ENCODE measurements at regions of chr17 and their contacts with region 1.

Region 1: GRCh38 chr17:41548844-41549595 is 20.9 kb upstream of the KRT19 start:
- DNase-seq: peak; percentile 70 to 90 (median 77)
- ATAC-seq: peak; percentile 90 to 92 (median 90)
- H3K4me3 ChIP-seq: peak overlapping the region in 10 of 12 donors; percentile 18 to 42 (median 29)
- H3K27ac ChIP-seq: peak overlapping the region in 2 of 12 donors; percentile 10 to 54
- H3K4me1 ChIP-seq: peaks cover 0 to 20% (median 10%) of the 10 kb centered on the region in 12 donors
- H3K27me3 ChIP-seq: peaks cover 0 to 19% (median 2%) of the 10 kb centered on the region in 9 donors
- CTCF ChIP-seq: peak; percentile 78 to 93 (median 83)
- POLR2A ChIP-seq: no peak

Region 2: GRCh38 chr17:40615295-40615988 is 933.6 kb before region 1 on chr17:
- intact Hi-C with region 1: loop called in 1 of 10 experiments (anchors 10 kb)
- DNase-seq: peak in 1 of 5 donors; percentile 39
- ATAC-seq: peak in 2 of 4 donors; percentile 43 to 45
- H3K4me3 ChIP-seq: no peak overlapping the region
- H3K27ac ChIP-seq: peak overlapping the region in 1 of 12 donors; percentile 32
- H3K4me1 ChIP-seq: peaks cover 0 to 25% (median 0%) of the 10 kb centered on the region in 12 donors
- H3K27me3 ChIP-seq: peaks cover 0 to 47% (median 4%) of the 10 kb centered on the region in 9 donors
- CTCF ChIP-seq: peak in 9 of 12 donors; percentile 7 to 42 (median 24)
- POLR2A ChIP-seq: no peak

Region 3: DNA sequence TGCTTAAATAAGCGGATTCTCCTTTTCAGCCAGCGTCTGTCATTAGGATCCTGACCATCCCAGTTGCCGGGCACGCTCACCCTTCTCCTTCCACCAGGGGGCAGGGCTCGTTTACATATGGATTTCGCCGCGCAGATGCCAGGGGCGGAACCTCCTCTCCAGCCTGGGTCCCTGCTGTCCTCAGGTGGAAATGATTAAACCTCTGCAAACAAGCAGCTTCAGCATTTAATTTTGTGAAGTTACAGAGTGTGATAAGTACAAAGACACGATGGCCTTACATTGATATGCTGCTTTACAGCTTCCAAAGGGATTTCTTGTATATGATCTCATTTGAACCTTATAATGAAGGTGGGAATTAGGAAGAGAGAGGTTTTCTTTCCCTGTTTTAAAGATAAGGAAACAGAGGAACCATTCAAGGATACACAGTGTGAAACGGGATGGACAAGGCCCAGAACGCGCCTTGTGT is 745.4 kb before region 1 on chr17:
- intact Hi-C with region 1: loop called in 3 of 10 experiments (anchors 2 to 10 kb)
- DNase-seq: peak; percentile 65 to 78 (median 70)
- ATAC-seq: peak; percentile 61 to 90 (median 86)
- H3K4me3 ChIP-seq: no peak overlapping the region
- H3K27ac ChIP-seq: no peak overlapping the region
- H3K4me1 ChIP-seq: peaks cover 0 to 6% (median 1%) of the 10 kb centered on the region in 12 donors
- H3K27me3 ChIP-seq: peaks cover 0 to 37% (median 8%) of the 10 kb centered on the region in 9 donors
- CTCF ChIP-seq: peak; percentile 72 to 92 (median 83)
- POLR2A ChIP-seq: no peak

Region 4: DNA sequence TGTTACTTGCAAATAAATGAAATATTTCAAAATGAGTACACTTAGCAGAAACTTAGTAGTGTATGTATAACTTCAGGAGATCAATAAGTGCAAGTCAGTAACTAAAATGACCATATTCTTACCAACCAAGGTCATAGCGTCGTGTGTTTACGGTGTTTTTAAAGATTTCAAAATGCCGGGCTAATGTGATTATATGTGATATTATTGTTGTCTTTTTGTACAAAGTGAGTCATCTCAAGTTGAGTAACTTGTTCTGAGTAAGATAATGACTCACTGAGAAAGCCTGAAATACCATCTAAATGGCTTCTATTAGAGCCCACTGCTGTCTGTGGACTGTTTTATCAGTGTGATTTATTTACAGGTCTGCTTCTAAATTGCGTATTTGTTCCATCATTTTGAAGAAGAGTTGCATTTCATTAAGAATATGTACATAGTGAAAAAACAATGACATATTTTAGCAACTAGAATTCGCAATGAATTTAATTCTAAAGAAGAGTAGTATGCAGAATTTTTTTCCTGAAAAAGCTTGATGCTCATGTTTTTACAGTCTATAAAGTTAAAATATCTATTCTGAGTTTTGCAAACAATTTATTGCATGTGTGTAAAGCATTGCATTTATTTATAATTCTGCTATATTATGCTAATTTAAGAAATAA is 694.7 kb before region 1 on chr17:
- intact Hi-C with region 1: loop called in 6 of 10 experiments (anchors 2 to 10 kb)
- DNase-seq: no peak
- ATAC-seq: no peak
- H3K4me3 ChIP-seq: no peak overlapping the region
- H3K27ac ChIP-seq: no peak overlapping the region
- H3K4me1 ChIP-seq: peaks cover 0 to 11% (median 2%) of the 10 kb centered on the region in 12 donors
- H3K27me3 ChIP-seq: peaks cover 0 to 10% (median 0%) of the 10 kb centered on the region in 9 donors
- CTCF ChIP-seq: no peak
- POLR2A ChIP-seq: no peak

Region 5: GRCh38 chr17:40859536-40859935 is 689.5 kb before region 1 on chr17:
- intact Hi-C with region 1: loop called in 6 of 10 experiments (anchors 2 to 10 kb)
- DNase-seq: no peak
- ATAC-seq: no peak
- H3K4me3 ChIP-seq: no peak overlapping the region
- H3K27ac ChIP-seq: no peak overlapping the region
- H3K4me1 ChIP-seq: peaks cover 0 to 11% (median 2%) of the 10 kb centered on the region in 12 donors
- H3K27me3 ChIP-seq: peaks cover 0 to 10% (median 0%) of the 10 kb centered on the region in 9 donors
- CTCF ChIP-seq: no peak
- POLR2A ChIP-seq: no peak

Region 6: GRCh38 chr17:41648411-41649195 is 99.6 kb after region 1 on chr17:
- intact Hi-C with region 1: loop called (anchors 1 to 5 kb)
- DNase-seq: peak; percentile 83 to 91 (median 85)
- ATAC-seq: peak; percentile 90 to 96 (median 92)
- H3K4me3 ChIP-seq: peak overlapping the region in 11 of 12 donors; percentile 2 to 57 (median 45)
- H3K27ac ChIP-seq: peak overlapping the region in 2 of 12 donors; percentile 38 to 41
- H3K4me1 ChIP-seq: peaks cover 0 to 29% (median 8%) of the 10 kb centered on the region in 12 donors
- H3K27me3 ChIP-seq: no peaks in the 10 kb centered on the region
- CTCF ChIP-seq: peak; percentile 84 to 98 (median 92)
- POLR2A ChIP-seq: no peak

Region 7: DNA sequence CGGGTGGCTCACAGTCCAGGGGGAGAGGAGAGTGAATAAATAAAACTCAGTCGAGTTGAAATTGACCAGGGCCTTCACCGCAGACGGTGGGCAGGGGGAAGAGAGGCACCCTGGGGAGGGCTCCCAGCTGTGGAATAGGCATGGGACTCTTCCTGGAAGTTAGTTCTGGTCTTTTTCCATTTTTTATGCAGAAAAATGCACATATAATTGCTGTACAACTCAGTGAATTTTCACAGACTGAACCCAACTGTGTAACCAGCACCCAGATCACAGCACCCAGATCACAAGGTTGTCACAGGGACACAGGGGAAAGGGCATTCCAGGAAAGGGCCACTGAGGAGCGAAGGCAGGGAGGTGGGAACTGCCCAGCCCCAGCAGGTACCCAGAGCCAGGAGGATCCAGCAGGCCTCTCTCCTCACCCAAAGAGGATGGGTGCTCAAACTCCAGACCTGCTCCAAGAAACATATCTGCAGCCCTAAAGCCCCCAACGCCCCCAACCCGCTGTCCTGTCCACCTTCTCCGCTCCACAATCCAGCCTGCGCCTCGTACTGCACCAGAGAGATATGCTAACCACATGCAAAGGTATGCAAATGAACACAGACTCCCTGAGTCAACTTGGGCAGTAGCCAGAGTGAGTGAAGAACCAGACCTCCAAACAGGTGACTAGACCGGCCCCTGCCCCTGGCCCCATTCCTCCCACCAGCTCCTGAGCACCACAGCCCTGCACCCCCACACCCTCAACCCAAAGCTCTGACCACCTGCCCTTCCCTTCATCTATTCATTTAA is 110.6 kb after region 1 on chr17:
- intact Hi-C with region 1: loop called in 8 of 10 experiments (anchors 1 to 5 kb)
- DNase-seq: peak in 1 of 5 donors; percentile 39
- ATAC-seq: no peak
- H3K4me3 ChIP-seq: no peak overlapping the region
- H3K27ac ChIP-seq: no peak overlapping the region
- H3K4me1 ChIP-seq: peaks cover 0 to 2% (median 0%) of the 10 kb centered on the region in 12 donors
- H3K27me3 ChIP-seq: no peaks in the 10 kb centered on the region
- CTCF ChIP-seq: no peak
- POLR2A ChIP-seq: no peak

Region 8: DNA sequence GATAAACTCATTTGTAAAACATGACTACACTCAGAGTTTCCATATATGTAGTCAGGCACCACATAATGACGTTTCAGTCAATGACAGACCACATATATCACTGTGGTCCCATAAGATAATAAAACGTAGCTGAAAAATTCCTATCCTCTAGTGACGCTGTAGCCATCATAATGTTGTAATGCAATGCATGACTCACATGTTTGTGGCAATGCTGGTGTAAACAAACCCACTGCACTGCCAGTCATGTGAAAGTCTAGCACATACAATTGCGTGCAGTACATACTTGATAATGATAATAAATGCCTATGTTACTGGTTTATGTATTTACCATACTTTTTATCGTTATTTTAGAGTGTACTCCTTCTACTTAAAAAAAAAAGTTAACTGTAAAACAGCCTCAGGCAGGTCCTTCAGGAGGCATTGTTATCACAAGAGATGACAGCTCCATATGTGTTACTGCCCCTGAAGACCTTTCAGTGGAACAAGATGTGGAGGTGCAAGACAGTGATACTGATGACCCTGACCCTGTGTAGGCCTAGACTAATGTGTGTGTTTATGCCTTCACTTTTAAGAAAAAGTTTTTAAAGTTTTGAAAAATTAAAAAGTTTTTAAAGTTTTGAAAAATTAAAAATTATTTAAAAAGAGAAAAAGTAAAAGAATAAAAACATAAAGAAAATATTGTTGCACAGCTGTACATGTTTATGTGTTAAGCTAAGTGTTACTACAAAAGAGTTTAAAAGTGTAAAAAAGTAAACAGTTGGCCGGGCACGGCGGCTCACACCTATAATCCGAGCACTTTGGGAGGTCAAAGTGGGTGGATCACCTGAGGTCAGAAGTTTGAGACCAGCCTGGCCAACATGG is 718.1 kb after region 1 on chr17:
- intact Hi-C with region 1: no loop called
- DNase-seq: no peak
- ATAC-seq: no peak
- H3K4me3 ChIP-seq: no peak overlapping the region
- H3K27ac ChIP-seq: peak overlapping the region in 1 of 12 donors; percentile 6
- H3K4me1 ChIP-seq: peaks cover 0 to 48% (median 4%) of the 10 kb centered on the region in 12 donors
- H3K27me3 ChIP-seq: no peaks in the 10 kb centered on the region
- CTCF ChIP-seq: no peak
- POLR2A ChIP-seq: no peak

Measured in heart left ventricle (tissue), 16 donors.